Common myeloid progenitor, CD34-positive (primary cell): ENCODE measurements at regions of chr18 and their contacts with region 1.

Region 1: DNA sequence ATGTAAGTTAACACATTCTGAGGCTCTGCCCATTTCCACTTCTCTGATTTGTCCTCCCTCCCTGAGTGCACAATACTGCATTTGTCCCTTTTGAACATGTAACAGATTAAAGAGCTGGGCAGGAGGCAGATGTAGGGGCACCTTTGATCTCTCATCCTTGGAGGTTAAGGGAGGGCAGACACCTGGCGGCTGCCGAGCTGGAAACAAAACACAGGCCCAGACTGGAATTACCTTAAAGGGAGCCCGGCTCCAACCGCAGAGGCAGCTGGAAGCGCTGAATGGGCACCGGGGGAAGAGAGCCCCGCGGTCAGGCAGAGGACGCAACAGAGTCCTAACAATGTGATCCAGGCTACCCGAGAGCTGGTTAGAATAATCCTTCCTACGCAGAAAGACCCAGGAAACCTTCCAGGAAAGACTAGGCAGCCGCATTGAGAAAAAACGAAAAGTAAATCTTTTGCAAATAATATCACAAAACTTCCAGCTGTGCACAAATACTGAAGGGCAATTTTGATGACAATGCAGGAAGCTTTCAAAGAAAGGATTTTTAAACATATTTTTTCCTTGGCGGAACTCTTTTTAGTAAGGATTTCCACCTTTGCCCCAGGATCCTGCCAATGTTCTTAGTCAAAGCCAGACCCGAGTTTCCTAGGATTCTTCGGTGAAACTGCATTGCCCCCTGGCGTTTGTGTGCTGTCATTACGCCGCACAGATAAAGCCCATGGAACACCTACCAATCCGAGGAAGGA is 216.0 kb downstream of the TGIF1 start:
- DNase-seq: peak; percentile 78 to 86 (median 81)
- H3K4me3 ChIP-seq: peak overlapping the region in 3 of 7 experiments; percentile 30 to 65 (median 38)
- H3K27ac ChIP-seq: peak overlapping the region in 1 of 2 experiments; percentile 67
- H3K4me1 ChIP-seq: peaks cover 10 to 32% (median 27%) of the 10 kb centered on the region in 4 experiments
- H3K27me3 ChIP-seq: no peaks in the 10 kb centered on the region

Region 2: DNA sequence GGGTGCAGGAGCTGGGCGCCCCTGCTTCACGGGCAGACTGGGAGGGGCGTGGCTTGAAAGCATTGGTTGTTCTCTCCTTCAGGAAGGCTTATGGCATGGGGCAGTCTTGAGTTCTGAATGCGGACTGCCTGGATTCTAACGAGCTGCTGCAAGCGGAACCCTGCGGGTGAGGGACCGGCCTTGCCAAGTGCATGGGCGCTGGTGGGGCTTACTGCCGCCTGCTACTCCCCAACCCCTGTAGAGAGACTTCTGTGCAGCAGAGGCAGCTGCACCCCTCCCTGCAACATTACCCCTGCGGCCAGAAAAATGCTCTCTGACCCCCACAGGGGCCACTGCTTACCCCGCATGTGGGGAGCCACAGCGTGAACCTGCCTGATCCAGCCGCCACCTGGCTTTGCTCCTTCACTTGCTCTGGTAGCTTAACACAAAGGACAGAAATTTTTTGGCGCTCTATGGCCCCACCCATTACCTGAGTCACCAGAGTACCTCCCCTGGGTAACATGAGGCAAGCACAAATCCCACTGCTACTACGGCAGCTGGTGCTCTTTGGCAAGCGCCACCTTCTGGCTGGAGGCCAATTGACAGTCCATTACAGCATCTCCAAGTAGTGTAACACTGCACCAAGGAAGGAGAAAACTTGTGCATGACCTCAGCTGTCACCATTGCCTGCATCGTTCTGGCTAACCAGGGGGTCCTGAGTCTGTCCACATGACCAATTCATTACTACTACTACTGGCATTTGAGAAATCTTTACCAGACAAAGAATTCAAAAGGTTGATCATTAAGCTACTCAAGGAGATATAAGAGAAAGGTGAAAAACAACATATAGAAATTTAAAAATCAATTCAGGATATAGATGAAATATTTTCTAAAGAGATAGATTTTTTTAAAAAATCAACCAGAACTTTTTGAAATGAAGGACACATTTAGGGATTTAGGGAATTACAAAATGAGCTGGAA is 368.6 kb before region 1 on chr18:
- CTCF ChIA-PET with region 1: interaction called, 20 read pairs
- POLR2A ChIA-PET with region 1: no interaction called
- DNase-seq: peak; percentile 93 to 98 (median 97)
- H3K4me3 ChIP-seq: peak overlapping the region; percentile 73 to 93 (median 91)
- H3K27ac ChIP-seq: peak overlapping the region; percentile 29 to 83
- H3K4me1 ChIP-seq: peaks cover 3 to 9% (median 8%) of the 10 kb centered on the region in 4 experiments
- H3K27me3 ChIP-seq: no peaks in the 10 kb centered on the region

Region 3: DNA sequence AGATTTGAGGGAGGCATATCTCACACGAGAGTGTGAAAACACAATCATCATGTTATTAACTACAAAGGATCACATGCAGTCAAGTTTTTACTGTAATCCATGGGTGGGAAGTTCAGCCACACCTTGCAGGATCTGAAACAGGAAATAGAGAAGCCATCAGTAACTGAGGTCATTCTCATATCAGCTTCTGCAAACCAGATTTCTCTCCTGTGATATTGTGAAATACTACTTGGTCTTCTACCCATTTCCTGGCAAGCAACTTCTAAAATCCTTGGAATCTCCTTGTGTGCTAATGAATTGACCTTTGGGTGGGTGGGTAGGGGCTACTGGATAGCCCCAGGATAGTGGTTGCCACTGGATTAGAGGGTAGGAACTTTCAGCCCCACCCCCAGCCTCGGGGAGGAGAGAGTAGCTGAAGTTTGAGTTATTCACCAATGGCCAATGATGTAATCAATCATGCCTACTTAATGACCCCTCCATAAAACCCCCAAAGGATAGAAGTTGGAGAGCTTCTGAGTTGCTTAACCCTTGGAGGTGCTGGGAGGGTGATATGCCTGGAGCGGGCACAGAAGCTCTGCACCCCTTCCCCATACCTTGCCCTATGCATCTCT is 241.6 kb before region 1 on chr18:
- CTCF ChIA-PET with region 1: no interaction called
- POLR2A ChIA-PET with region 1: no interaction called
- DNase-seq: no peak
- H3K4me3 ChIP-seq: no peak overlapping the region
- H3K27ac ChIP-seq: no peak overlapping the region
- H3K4me1 ChIP-seq: no peaks in the 10 kb centered on the region
- H3K27me3 ChIP-seq: no peaks in the 10 kb centered on the region

Region 4: GRCh38 chr18:3585656-3586509 is 80.1 kb before region 1 on chr18:
- CTCF ChIA-PET with region 1: interaction called, 72 read pairs
- POLR2A ChIA-PET with region 1: no interaction called
- DNase-seq: peak; percentile 85 to 88 (median 85)
- H3K4me3 ChIP-seq: no peak overlapping the region
- H3K27ac ChIP-seq: no peak overlapping the region
- H3K4me1 ChIP-seq: peaks cover 5 to 20% (median 16%) of the 10 kb centered on the region in 4 experiments
- H3K27me3 ChIP-seq: no peaks in the 10 kb centered on the region

Region 5: DNA sequence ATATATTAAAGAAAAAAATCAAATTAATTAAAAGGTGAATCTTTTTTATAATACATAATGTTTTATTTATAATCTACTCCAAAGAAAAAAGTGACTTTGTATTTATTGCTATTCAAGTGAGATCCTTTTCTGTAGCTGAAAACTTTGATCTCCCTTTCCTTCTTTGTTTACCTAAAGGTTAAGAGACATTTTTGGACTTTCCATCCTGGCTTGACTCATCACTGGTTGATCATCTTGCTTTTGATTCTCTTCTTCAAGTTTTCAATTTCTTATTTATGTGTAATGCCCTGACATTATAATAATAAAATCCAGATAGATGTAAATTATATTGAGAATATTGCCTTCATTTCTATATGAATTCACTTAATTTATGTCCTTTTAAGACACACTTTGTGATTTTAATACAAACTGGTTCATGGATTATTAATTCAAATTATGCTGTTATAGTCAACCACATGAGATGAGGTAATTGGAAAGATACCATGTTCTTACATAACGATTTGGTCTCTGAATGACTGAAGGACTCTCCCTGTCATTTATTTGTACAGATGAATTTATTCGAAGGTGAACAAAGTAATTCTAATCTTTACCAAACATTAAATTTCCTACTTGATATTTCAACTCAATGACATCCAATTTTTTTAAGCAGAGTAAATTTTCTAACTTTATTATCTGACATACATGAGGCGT is 31.6 kb before region 1 on chr18:
- CTCF ChIA-PET with region 1: interaction called, 21 read pairs
- POLR2A ChIA-PET with region 1: no interaction called
- DNase-seq: no peak
- H3K4me3 ChIP-seq: no peak overlapping the region
- H3K27ac ChIP-seq: no peak overlapping the region
- H3K4me1 ChIP-seq: peaks cover 0 to 2% (median 0%) of the 10 kb centered on the region in 4 experiments
- H3K27me3 ChIP-seq: no peaks in the 10 kb centered on the region

Region 6: DNA sequence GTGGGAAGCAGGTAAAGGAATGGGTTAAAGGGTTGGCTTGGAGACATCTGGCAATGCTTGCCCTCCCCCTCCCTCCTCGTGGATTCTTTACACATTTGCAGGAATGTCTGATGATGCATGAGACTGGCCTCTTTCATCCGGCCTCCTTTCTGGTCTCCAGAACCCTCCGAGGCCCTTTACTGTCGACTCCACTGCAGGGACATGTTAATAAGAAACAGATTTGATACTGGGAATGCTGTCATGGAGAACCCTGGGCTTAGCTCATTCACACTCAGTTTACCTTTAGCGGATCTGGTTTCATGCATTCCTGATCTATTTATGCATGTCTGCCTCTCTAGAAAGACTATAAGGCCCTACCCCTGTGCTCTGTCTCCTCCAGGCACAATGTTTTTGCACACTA is 22.7 kb after region 1 on chr18:
- CTCF ChIA-PET with region 1: interaction called, 25 read pairs
- POLR2A ChIA-PET with region 1: no interaction called
- DNase-seq: no peak
- H3K4me3 ChIP-seq: no peak overlapping the region
- H3K27ac ChIP-seq: no peak overlapping the region
- H3K4me1 ChIP-seq: peaks cover 0 to 5% (median 1%) of the 10 kb centered on the region in 4 experiments
- H3K27me3 ChIP-seq: no peaks in the 10 kb centered on the region